AG04449 (cell line): ENCODE measurements at regions of chr15 and their contacts with region 1.

Region 1: GRCh38 chr15:91706322-91707032 is 147.0 kb upstream of the SLCO3A1 start:
- DNase-seq: no peak
- H3K4me3 ChIP-seq: no peak overlapping the region
- CTCF ChIP-seq: peak; percentile 84

Region 2: DNA sequence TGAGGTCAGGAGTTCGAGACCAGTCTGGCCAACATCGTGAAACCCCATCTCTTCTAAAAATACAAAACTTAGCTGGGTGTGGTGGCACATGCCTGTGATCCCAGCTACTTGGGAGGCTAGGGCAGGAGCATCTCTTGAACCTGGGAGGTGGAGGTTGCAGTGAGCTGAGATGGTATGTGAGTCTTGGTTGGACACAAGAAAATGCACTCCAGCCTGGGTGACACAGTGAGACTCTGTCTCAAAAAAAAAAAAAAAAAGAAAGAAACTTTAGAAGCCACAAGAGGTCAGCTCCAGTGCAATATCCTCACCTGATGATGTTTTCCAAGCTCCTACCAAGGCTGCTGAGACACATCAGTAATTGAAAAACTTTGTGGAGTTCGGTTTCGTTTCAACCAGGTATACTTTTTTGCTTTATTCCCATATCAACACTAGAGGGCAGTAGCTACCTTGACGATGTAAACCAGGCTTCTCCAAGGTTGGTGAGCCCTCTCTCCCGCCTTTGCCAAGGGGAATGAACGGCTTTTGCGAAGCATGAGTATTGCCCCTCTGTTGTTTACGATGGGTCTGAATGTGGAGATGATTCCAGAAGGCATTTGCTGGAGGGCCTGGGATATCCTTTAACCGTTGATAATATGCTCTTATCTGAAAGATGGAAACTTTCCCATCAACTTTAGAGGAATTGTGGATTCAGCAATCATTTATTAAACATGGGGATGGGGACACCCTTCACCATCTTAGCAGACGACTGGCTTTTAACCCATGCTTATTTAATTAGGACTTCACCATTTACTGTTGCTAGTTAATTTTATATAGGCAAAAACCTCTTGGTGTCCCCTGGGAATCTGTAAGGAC is 403.7 kb before region 1 on chr15:
- CTCF ChIA-PET with region 1: interaction called, 16 read pairs
- POLR2A ChIA-PET with region 1: no interaction called
- DNase-seq: peak; percentile 9
- H3K4me3 ChIP-seq: no peak overlapping the region
- CTCF ChIP-seq: peak; percentile 60

Region 3: DNA sequence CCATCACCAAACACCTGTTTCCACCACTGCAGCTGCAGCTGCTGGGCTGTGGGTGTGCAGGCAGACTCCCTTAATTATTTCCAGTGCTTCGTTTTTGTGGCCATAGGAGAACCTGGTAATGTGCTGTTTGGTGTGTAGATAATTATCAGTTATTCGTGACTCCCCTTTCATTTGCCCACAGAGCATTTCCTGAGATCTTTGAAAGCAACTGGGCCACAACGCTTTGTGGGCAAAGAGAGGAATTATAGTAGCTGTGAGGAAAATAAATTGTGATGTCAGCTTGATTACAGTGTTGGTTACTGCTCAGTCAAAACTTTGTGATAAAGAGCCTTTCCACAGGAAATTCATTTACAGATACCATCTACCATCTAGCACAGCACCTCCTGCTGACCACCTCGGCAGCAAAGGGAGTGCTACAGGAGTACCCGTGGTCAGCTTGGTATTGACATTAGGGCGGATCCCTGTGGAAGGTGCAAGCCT is 46.3 kb before region 1 on chr15:
- CTCF ChIA-PET with region 1: no interaction called
- POLR2A ChIA-PET with region 1: no interaction called
- DNase-seq: no peak
- H3K4me3 ChIP-seq: no peak overlapping the region
- CTCF ChIP-seq: no peak

Region 4: DNA sequence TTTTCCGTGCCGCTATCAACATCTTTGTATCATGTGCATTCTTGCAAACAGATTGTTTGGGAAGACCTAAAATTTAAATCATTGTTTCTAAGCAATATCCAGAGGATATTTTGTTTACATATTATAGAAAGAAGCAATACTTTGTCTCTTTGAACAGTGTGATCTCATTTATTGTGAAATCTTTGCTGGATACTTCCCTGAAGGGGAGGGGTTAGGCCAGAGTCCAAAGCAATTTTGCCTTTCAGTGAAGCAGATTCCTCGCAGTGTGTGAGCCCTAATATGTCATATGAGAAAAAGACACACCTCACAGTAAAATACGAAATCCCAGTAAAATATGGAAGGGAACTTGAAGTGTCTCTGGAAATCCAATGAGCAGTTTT is 11.7 kb before region 1 on chr15:
- CTCF ChIA-PET with region 1: interaction called, 34 read pairs
- POLR2A ChIA-PET with region 1: no interaction called
- DNase-seq: no peak
- H3K4me3 ChIP-seq: no peak overlapping the region
- CTCF ChIP-seq: no peak

Region 5: GRCh38 chr15:91717811-91718210 is 11.3 kb after region 1 on chr15:
- CTCF ChIA-PET with region 1: interaction called, 14 read pairs
- POLR2A ChIA-PET with region 1: no interaction called
- DNase-seq: no peak
- H3K4me3 ChIP-seq: no peak overlapping the region
- CTCF ChIP-seq: no peak

Region 6: DNA sequence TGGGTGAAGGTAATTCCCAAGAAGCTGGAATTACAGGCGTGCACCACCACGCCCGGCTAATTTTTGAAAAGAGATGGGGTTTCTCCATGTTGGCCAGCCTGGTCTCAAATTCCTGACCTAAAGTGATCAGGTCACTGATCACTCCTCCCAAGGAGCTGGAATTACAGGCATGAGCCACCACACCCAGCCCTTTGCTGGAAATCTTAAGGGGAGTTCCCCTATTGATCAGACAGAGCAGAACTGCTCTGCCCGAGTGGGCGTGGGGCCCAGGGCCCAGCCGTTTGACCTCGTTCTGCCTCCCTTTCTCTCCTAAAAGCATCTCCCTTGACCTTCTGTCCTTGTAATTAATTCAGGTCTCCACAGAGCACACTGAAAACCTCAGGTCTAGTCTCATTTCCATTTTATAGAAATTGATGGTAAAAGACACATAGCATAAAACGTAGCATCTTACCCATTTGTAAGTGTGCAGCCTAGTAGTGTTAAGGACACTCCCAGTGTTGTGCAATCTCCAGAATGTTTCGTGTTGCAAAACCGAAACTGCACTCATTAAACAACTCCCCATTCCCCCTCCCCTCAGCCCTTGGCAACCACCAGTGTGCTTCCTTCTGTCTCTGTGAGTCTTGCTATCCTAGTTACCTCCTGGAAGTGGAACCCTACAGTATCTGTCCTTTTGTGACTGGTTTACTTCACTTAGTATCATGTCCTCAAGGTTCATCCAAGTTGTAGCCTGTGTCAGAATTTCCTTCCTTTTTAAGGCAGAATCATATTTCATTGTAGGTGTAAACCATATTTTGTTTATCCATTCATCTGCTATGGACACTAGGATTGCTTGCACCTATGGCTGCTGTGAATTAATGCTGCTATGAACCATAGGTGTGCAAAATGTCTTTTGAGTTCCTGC is 236.4 kb after region 1 on chr15:
- CTCF ChIA-PET with region 1: interaction called, 14 read pairs
- POLR2A ChIA-PET with region 1: no interaction called
- DNase-seq: peak; percentile 23
- H3K4me3 ChIP-seq: no peak overlapping the region
- CTCF ChIP-seq: no peak

Region 7: DNA sequence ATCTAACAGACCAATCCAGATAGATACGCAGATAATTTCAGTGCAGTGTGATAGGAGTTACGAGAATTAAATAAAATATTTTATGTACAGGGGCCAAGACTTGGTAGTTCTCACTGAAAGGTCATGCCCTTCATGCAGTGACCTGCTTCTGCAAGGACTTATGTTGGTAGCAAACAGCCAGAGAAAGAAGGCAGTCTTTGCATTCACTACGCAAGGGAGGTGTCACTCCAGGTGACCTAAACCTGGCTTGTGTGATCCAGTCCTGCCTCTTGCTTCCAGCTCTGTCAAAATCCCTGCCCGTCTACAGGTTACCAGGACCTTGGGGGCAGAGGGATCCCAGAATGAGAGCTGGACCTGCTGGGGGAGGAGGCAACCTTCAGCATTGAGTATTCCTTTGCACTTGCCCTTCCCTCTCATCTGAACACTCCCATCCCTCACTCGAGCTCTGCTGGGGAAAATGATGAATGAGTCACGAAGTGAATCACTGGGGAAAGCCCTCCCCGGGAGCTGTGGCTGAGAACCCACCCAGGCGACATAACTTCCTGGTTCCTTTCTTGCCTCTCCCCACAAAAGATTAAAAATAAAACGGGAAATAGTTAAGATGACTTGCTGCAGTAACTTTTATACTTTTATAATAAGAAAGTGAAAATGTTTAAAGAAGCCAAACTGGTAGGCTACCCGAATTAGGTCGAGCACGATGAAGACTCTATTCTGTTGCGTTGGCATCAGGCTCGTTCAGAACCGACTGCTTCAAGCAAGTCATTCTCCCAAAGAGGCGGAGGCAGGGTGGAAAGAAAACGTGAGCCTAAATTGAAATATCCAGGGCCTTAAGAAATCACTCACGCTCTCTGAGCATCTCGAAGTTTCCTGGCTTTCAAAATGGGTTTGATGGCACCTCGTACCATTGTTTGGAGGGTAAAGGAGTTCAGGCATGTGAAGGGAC is 363.1 kb after region 1 on chr15:
- CTCF ChIA-PET with region 1: interaction called, 11 read pairs
- POLR2A ChIA-PET with region 1: no interaction called
- DNase-seq: peak; percentile 21
- H3K4me3 ChIP-seq: no peak overlapping the region
- CTCF ChIP-seq: no peak

Region 8: DNA sequence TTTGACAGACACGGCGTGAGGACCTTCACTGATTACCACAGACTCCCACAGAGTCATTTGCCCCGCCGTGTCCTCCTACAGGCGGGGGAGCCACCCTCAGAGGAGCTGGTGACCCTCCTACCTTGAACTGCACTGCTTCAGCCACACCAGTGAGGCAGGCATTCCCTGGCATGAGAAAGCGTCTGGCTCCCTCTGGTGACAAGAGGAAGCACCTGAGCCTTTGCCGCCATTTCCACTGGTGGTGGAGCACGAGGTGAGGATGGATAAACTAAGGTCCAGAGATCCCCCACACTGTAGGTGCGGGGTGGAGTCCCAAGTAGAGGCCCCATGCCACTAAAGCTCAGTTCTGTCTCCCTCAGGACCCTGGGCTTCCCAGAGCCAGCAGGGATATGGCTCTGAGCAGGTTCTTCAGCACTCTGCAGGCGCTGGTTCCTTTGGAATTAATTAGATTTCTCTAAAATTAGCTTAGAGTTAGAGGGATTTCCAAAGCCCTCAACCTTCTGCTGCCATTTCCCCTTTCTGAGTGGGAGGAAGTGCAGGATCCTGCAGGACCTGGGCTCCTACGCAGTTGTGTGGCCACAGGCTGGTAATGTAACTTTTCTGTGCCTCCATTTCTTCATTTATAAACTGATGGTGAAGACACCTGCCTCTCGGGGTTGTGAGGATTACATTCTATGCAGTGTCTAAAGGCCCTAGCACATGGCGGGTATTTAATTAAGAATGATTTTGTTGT is 371.0 kb after region 1 on chr15:
- CTCF ChIA-PET with region 1: interaction called, 58 read pairs
- POLR2A ChIA-PET with region 1: no interaction called
- DNase-seq: no peak
- H3K4me3 ChIP-seq: no peak overlapping the region
- CTCF ChIP-seq: peak; percentile 82